ENCODE measurements at regions of chr3 and their contacts with region 1.

Region 1: DNA sequence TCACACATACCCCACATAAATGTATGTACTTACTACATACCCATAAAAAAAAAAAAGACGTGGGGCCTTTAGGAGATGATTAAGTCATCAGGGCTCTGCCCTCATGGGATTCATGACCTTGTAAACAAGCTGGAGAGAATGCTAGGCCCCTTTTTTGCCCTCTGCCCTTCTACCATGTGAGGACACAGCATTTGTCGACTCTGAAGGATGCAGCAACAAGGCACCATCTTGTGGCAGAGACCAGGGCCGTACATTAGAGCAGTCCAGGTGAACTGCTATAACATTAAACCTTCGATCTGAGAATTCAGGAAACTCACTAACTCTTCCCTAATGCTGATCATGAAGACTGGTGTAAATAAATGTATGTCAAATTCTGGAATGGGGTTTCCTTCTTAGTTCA is 30.6 kb upstream of the SIAH2 start:
- DNase-seq: no peak
- H3K4me3 ChIP-seq: no peak overlapping the region
- H3K27ac ChIP-seq: no peak overlapping the region
- H3K4me1 ChIP-seq: no peaks in the 10 kb centered on the region
- H3K27me3 ChIP-seq: no peaks in the 10 kb centered on the region
- CTCF ChIP-seq: no peak
- POLR2A ChIP-seq: no peak

Region 2: DNA sequence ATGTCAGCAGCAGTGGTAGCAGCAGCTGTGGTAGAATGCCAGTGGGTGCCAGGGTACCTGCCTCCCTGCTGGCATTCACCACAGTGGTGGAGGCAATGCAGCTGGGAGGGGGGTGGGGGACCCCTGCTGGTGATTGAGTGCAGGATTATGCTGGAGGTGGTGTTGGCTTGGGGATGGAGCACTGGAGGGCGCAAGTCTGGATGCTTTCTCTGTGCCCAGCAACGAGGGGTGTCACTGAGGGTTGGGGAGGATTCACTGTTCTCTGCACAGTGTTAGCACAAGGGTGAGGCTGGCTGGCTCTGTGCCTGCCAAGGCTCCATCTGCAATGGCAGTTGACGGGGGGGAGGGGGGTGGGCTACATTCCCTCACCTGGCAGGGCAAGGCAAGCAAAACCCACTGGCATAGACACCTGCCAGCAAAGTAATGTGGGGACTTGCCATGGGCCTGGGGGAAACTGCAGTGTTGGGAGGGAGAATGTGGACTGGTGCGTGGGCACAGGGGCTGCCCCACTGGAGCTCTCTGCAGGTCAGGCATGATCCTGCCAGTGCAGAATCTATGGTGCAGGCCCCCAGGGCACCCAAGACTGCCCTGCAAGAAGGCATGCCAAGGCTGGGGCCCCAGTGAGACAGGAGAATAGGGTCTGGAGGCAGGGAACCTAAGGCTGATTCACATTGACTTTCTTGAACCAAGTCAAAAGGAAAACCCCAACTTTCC is 47.4 kb after region 1 on chr3:
- intact Hi-C with region 1: loop called (anchors 2 kb)
- DNase-seq: no peak
- H3K4me3 ChIP-seq: no peak overlapping the region
- H3K27ac ChIP-seq: no peak overlapping the region
- H3K4me1 ChIP-seq: peaks cover 0 to 5% of the 10 kb centered on the region in 2 donors
- H3K27me3 ChIP-seq: no peaks in the 10 kb centered on the region
- CTCF ChIP-seq: no peak
- POLR2A ChIP-seq: no peak